Activated CD8-positive, alpha-beta memory T cell treated with anti-CD3 and anti-CD28 coated beads, Interleukin-2, amount 10 ng/mL, durations not matched to agents 7 days and 5 days (primary cell): ENCODE measurements at regions of chr3 and their contacts with region 1.

Region 1: DNA sequence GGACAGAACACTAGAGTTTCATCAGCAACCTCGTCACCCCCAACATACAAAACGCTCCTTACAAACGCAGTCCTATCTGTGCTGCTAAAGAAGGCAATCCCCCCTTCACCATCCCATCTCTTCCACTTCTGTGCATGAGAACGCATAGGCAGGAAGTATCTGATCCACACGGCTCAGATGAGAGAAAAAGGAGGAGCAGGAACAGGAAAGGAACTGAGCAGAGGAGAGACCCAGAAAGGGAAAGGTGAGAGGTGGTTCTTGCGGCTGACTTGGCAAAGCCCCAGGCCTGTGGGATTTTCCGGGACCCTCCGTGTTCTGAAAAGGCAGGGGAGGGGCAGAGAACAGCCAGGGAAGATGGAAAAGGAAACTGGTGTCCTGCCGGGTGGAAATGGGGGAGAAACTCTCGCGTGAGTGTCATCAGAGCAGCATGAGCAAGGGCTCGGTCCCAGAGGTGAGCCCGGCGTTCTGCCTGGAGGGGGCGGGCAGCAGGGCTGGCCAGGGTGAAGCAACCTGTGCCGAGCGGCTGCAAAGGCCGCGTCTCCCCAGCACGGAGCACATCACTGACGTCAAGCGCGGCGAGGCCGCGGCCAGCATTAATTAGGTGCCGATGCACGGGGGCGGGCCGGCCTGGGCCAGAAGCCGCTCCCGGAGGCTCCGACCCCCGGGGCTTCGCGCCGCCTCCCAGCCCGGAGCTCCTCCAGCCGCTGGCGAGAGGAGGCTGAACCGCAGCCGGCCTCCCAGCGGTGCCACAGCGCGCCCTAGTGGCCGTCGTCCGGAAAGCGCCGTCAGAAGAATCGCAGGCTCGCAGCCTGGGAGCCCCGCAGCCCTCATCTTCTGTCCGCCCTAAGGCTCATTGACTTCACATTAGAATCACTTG is 35.8 kb downstream of the CPN2 start:
- DNase-seq: peak; percentile 86
- ATAC-seq: peak; percentile 84
- H3K4me3 Mint-ChIP-seq: peak overlapping the region; percentile 68
- H3K27ac Mint-ChIP-seq: peak overlapping the region; percentile 67
- H3K4me1 Mint-ChIP-seq: peaks cover 30% of the 10 kb centered on the region
- H3K27me3 Mint-ChIP-seq: peaks cover 80% of the 10 kb centered on the region

Region 2: DNA sequence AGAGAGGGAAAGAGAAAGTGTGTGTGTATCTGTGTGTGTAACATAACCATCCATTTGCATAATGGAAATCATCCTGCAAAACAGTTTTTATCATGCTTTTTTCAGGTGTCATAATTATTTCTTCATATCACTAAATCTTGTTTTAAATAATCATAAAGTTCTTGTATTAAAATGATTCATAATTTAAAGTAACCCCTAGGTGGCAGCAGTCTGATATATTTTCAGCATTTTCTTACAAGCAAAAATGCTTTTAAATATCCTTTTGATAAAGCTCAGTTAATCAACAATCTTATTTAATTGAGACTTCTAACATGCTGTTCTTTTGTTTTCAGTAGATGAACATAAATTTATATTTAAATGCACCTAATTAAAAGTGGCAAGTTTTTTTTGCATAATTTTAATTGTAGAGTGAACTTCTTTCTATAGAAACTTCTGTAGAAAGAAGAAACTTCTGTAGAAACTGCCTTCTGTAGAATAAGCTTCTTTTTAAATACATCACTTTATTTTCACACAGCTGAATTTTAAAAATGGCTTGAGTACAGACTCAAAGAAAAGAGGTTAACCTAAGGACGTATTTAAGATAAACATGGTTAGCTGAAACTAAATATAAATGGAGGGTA is 649.8 kb before region 1 on chr3:
- CTCF ChIA-PET with region 1: interaction called, 30 read pairs
- DNase-seq: no peak
- ATAC-seq: no peak
- H3K4me3 Mint-ChIP-seq: no peak overlapping the region
- H3K27ac Mint-ChIP-seq: no peak overlapping the region
- H3K4me1 Mint-ChIP-seq: peaks cover 3% of the 10 kb centered on the region
- H3K27me3 Mint-ChIP-seq: no peaks in the 10 kb centered on the region

Region 3: DNA sequence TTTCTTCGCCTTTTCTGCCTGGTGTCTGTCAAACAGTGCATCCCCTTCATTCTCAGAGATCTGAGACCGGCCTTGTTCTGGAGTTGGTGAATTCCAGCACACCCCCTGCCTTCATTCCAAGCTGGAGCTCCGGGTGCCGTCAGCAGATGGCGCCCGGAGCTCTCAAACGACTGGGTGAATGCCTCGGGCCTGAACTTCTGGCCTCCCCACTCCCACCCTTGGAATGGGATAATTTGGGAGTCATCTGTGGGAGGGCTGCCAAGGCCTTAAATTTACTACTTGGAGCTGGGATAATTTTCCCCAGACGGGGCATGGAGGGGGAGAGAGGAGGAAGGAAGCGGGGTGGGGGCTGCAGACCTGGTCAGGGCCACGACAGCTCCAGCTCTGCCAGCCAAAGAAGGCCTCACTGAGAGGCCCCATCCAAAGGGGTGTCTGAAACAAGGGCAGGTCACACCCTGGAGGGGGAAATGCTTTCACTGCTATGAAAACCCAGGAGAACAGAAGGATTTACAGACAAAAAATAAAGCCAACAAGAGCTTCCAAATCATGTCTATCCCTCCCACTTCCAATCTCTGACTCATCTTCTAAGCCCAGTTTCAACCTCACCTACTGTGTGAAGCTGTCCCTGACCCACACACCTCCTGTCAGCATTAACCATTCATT is 534.4 kb before region 1 on chr3:
- CTCF ChIA-PET with region 1: interaction called, 46 read pairs
- DNase-seq: no peak
- ATAC-seq: no peak
- H3K4me3 Mint-ChIP-seq: no peak overlapping the region
- H3K27ac Mint-ChIP-seq: no peak overlapping the region
- H3K4me1 Mint-ChIP-seq: peaks cover 4% of the 10 kb centered on the region
- H3K27me3 Mint-ChIP-seq: peaks cover 65% of the 10 kb centered on the region

Region 4: GRCh38 chr3:194134757-194135528 is 180.4 kb before region 1 on chr3:
- CTCF ChIA-PET with region 1: interaction called, 38 read pairs
- DNase-seq: peak; percentile 85
- ATAC-seq: peak; percentile 66
- H3K4me3 Mint-ChIP-seq: peak overlapping the region; percentile 63
- H3K27ac Mint-ChIP-seq: peak overlapping the region; percentile 51
- H3K4me1 Mint-ChIP-seq: peaks cover 56% of the 10 kb centered on the region
- H3K27me3 Mint-ChIP-seq: peaks cover 83% of the 10 kb centered on the region

Region 5: DNA sequence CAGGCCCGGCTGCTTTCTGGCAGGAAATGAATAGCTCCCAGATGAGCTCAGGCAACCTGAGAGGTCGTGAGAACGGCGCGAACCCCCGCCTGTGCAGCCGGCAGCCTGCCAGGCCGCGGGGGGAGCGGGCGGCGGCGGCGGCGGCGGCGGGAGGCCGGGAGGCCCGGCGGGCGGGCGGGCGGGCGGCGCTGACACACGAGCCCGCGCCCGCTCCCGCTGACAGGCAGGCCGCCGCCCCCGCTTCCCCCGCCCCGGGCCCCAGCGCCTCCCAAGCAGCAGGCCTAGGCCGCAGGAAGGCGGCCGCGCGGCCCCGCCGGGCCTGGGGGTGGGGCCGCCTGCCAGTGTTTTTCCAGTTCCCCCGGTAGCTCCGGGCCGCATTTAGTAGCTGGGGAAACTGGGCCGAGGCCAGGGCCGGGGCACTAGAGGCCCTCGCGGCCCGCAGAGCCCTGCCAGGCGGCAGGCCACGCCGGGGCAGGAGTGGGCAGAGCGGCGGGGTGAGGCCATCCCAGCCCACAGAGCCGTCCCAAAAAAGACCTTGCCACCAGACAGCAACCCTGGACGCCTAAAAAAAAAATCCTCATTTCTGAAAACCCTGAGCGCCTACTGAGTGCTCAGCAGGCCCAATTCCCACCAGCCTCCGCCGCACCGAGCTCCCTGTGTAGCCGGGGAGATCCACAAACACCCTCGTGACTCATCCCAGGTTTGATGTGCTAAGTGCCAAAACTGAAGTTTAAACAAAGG is 173.7 kb before region 1 on chr3:
- CTCF ChIA-PET with region 1: interaction called, 38 read pairs
- DNase-seq: peak; percentile 73
- ATAC-seq: peak; percentile 69
- H3K4me3 Mint-ChIP-seq: peak overlapping the region; percentile 35
- H3K27ac Mint-ChIP-seq: no peak overlapping the region
- H3K4me1 Mint-ChIP-seq: peaks cover 26% of the 10 kb centered on the region
- H3K27me3 Mint-ChIP-seq: peaks cover 76% of the 10 kb centered on the region

Region 6: DNA sequence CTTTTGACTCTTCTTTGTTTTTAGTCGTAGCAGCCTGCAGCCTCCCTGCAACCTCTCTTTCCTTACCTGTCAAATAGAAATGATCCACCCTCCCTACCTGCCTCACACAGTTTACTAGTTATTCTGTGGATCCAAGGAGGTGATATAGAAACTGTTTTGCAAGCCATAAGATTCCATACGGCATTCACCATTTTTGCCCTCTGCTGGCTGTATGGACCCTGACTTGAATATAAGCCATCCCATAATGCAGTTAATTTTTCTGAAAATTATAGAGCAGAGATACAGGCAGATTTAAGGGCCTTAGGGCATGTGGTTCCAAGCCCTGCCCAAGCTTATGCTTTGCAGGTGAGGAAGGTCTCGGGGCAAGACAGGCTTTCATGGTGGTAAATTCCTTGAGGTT is 28.0 kb before region 1 on chr3:
- CTCF ChIA-PET with region 1: no interaction called
- DNase-seq: no peak
- ATAC-seq: no peak
- H3K4me3 Mint-ChIP-seq: no peak overlapping the region
- H3K27ac Mint-ChIP-seq: no peak overlapping the region
- H3K4me1 Mint-ChIP-seq: no peaks in the 10 kb centered on the region
- H3K27me3 Mint-ChIP-seq: peaks cover 45% of the 10 kb centered on the region